CD8-positive, alpha-beta T cell (primary cell): ENCODE measurements at regions of chr6 and their contacts with region 1.

Region 1: GRCh38 chr6:112029045-112029822 is 24.7 kb upstream of the CCN6 start:
- DNase-seq: peak; percentile 35 to 81 (median 64)
- ATAC-seq: no peak
- H3K4me3 ChIP-seq: no peak overlapping the region
- H3K4me3 Mint-ChIP-seq: peak overlapping the region; percentile 61
- H3K27ac ChIP-seq: peak overlapping the region; percentile 46 to 85
- H3K27ac Mint-ChIP-seq: peak overlapping the region; percentile 95
- H3K4me1 ChIP-seq: peaks cover 66% of the 10 kb centered on the region
- H3K4me1 Mint-ChIP-seq: peaks cover 76% of the 10 kb centered on the region
- H3K27me3 ChIP-seq: no peaks in the 10 kb centered on the region
- H3K27me3 Mint-ChIP-seq: no peaks in the 10 kb centered on the region
- CTCF ChIP-seq: peak; percentile 58

Region 2: DNA sequence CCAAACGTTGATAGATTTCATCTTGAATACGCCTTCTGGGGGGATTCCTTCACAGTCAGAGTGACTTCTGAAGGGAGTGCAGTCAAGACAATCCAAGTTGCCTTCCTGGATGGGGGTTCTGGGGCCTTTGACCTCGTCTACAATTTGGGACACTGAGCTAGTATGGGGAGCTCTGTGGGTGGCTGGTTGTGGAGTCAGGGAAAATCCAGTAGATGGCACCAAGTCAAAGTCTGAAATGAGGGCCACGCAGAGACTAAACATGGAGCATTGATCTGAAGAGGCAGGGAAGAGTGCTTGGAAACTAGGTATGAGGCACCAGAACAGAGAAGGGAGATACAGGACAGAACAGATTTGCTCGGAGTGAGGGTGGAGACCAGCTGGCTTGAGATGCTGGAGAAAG is 18.9 kb before region 1 on chr6:
- CTCF ChIA-PET with region 1: interaction called, 43 read pairs
- POLR2A ChIA-PET with region 1: interaction called, 9 read pairs
- intact Hi-C with region 1: loop called in 1 of 2 experiments (anchors 2 kb)
- DNase-seq: peak in 3 of 9 experiments; percentile 45 to 63 (median 61)
- ATAC-seq: peak; percentile 57
- H3K4me3 ChIP-seq: no peak overlapping the region
- H3K4me3 Mint-ChIP-seq: no peak overlapping the region
- H3K27ac ChIP-seq: no peak overlapping the region
- H3K27ac Mint-ChIP-seq: no peak overlapping the region
- H3K4me1 ChIP-seq: no peaks in the 10 kb centered on the region
- H3K4me1 Mint-ChIP-seq: peaks cover 9% of the 10 kb centered on the region
- H3K27me3 ChIP-seq: no peaks in the 10 kb centered on the region
- H3K27me3 Mint-ChIP-seq: no peaks in the 10 kb centered on the region
- CTCF ChIP-seq: no peak

Region 3: DNA sequence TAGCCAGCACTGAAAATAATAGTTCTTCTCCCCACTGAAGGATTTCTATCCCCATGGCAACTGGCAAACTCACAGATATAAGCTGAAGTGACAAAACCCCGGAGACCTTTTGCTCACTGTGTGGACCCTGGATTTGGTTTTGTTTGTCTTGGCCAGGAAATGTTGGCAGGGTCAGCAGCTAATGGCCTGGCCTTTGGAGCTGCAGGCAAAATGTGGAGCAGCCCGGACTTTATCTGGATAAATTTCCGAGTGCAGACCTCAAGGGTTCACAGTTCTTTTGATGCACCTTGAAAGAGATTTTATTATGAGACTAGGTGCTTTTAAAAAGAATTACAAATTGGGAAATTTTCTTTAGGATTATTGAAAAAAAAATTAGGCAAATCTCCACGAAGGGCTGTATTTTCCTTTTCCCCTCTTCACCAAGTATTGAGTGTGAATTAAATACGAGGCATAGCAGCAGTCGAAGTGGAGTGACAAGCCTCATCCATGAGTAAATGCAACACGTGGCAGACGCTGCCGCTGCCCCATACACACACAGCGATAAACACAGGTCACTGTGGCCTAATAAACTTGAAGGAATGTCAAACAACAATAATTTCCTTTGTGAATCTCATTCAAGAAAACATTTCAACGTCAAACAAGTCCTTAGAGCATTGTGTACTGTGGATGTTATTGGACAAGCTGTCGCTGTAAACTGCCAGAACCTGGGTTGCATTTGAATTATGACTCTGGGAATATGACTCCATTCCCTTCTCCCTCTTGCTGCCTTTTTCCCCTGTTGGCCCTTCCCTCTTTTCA is 10.4 kb before region 1 on chr6:
- CTCF ChIA-PET with region 1: interaction called, 22 read pairs
- POLR2A ChIA-PET with region 1: interaction called, 5 read pairs
- intact Hi-C with region 1: no loop called
- DNase-seq: no peak
- ATAC-seq: no peak
- H3K4me3 ChIP-seq: no peak overlapping the region
- H3K4me3 Mint-ChIP-seq: no peak overlapping the region
- H3K27ac ChIP-seq: no peak overlapping the region
- H3K27ac Mint-ChIP-seq: no peak overlapping the region
- H3K4me1 ChIP-seq: no peaks in the 10 kb centered on the region
- H3K4me1 Mint-ChIP-seq: peaks cover 17% of the 10 kb centered on the region
- H3K27me3 ChIP-seq: no peaks in the 10 kb centered on the region
- H3K27me3 Mint-ChIP-seq: no peaks in the 10 kb centered on the region
- CTCF ChIP-seq: no peak

Region 4: GRCh38 chr6:112061605-112062004 is 32.4 kb after region 1 on chr6:
- CTCF ChIA-PET with region 1: no interaction called
- POLR2A ChIA-PET with region 1: no interaction called
- intact Hi-C with region 1: no loop called
- DNase-seq: no peak
- ATAC-seq: no peak
- H3K4me3 ChIP-seq: no peak overlapping the region
- H3K4me3 Mint-ChIP-seq: no peak overlapping the region
- H3K27ac ChIP-seq: no peak overlapping the region
- H3K27ac Mint-ChIP-seq: no peak overlapping the region
- H3K4me1 ChIP-seq: no peaks in the 10 kb centered on the region
- H3K4me1 Mint-ChIP-seq: no peaks in the 10 kb centered on the region
- H3K27me3 ChIP-seq: no peaks in the 10 kb centered on the region
- H3K27me3 Mint-ChIP-seq: no peaks in the 10 kb centered on the region
- CTCF ChIP-seq: no peak